Mammary epithelial cell (primary cell): ENCODE measurements at regions of chr10 and their contacts with region 1.

Region 1: GRCh38 chr10:69957886-69958555 is 94.6 kb upstream of the MACROH2A2 start:
- DNase-seq: peak; percentile 52
- H3K4me3 ChIP-seq: no peak overlapping the region
- H3K27ac ChIP-seq: no peak overlapping the region
- H3K4me1 ChIP-seq: peaks cover 22% of the 10 kb centered on the region
- H3K27me3 ChIP-seq: no peaks in the 10 kb centered on the region
- CTCF ChIP-seq: peak; percentile 87 to 98

Region 2: GRCh38 chr10:69644658-69645295 is 313.2 kb before region 1 on chr10:
- CTCF ChIA-PET with region 1: no interaction called
- dilution Hi-C with region 1: no loop called
- in situ Hi-C with region 1: no loop called
- intact Hi-C with region 1: loop called (anchors 1 kb)
- DNase-seq: peak; percentile 52
- H3K4me3 ChIP-seq: no peak overlapping the region
- H3K27ac ChIP-seq: no peak overlapping the region
- H3K4me1 ChIP-seq: peaks cover 28% of the 10 kb centered on the region
- H3K27me3 ChIP-seq: no peaks in the 10 kb centered on the region
- CTCF ChIP-seq: peak; percentile 78 to 88

Region 3: GRCh38 chr10:69742928-69743602 is 215.0 kb before region 1 on chr10:
- CTCF ChIA-PET with region 1: no interaction called
- dilution Hi-C with region 1: no loop called
- in situ Hi-C with region 1: no loop called
- intact Hi-C with region 1: no loop called
- DNase-seq: no peak
- H3K4me3 ChIP-seq: no peak overlapping the region
- H3K27ac ChIP-seq: no peak overlapping the region
- H3K4me1 ChIP-seq: no peaks in the 10 kb centered on the region
- H3K27me3 ChIP-seq: no peaks in the 10 kb centered on the region
- CTCF ChIP-seq: peak; percentile 33 to 38

Region 4: DNA sequence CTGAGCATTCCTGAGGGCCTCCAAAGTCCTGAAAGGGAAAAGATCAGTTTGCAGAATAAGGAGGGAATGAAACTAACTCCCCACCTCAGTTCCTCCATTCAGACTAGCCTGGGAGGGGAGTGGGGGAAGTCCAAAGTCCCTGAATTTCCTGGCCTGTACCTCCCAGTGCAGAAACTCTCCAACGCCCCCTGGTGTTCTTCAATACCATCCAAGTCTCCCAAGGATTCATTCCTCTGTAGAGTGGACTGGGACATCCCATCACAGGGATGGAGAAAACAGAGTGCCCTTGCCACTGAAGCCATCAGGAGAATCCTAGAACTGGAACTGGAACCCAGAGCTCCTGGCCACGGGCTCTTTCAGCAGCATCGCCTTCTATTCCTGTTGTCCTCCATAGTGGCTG is 157.9 kb before region 1 on chr10:
- CTCF ChIA-PET with region 1: no interaction called
- dilution Hi-C with region 1: no loop called
- in situ Hi-C with region 1: no loop called
- intact Hi-C with region 1: loop called (anchors 5 kb)
- DNase-seq: peak; percentile 48
- H3K4me3 ChIP-seq: no peak overlapping the region
- H3K27ac ChIP-seq: no peak overlapping the region
- H3K4me1 ChIP-seq: peaks cover 35% of the 10 kb centered on the region
- H3K27me3 ChIP-seq: no peaks in the 10 kb centered on the region
- CTCF ChIP-seq: peak; percentile 80 to 86

Region 5: DNA sequence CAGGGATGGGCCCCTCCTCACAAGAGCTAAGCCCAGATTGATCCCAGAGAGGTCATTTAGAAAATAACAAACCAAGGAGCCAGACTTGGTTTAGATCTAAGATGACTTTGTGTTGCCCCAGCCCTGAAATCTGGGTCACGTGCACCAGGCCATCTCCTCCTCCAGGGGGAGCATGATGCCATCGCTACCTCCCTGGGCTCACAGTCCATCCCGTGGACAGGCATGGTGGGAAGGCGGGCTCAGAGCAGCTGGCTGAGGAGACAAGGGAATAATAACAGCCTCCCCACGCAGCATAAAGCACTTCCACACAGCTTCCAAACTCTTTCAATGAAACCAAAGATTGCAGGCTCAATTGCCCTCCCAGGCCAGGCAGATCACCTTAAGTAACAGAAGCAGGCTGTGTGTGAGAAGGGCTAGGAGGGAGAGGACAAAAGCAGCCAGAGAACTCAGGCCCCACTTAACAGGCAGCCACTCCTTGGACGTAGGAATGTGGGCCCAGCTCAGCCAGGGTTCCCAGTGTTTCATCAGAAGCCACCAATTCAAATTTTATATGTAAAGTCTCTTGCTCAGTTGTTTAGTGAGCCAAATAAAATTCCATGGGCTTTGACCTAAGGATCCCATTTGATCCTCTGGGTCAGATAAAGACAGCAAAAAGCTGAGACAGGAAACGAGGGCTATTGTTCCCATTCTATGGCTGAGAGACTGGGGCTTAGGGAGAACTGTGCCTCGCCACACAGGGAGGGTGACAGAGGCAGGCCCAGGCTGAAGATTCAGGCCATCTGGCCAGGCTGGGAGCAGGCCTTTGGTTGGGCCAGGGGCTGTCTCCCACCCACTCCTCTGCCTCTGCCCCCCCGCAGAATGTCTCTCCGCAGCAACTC is 56.2 kb before region 1 on chr10:
- CTCF ChIA-PET with region 1: no interaction called
- dilution Hi-C with region 1: no loop called
- in situ Hi-C with region 1: no loop called
- intact Hi-C with region 1: loop called (anchors 1 kb)
- DNase-seq: peak; percentile 19
- H3K4me3 ChIP-seq: no peak overlapping the region
- H3K27ac ChIP-seq: no peak overlapping the region
- H3K4me1 ChIP-seq: peaks cover 3% of the 10 kb centered on the region
- H3K27me3 ChIP-seq: no peaks in the 10 kb centered on the region
- CTCF ChIP-seq: peak; percentile 74 to 76

Region 6: DNA sequence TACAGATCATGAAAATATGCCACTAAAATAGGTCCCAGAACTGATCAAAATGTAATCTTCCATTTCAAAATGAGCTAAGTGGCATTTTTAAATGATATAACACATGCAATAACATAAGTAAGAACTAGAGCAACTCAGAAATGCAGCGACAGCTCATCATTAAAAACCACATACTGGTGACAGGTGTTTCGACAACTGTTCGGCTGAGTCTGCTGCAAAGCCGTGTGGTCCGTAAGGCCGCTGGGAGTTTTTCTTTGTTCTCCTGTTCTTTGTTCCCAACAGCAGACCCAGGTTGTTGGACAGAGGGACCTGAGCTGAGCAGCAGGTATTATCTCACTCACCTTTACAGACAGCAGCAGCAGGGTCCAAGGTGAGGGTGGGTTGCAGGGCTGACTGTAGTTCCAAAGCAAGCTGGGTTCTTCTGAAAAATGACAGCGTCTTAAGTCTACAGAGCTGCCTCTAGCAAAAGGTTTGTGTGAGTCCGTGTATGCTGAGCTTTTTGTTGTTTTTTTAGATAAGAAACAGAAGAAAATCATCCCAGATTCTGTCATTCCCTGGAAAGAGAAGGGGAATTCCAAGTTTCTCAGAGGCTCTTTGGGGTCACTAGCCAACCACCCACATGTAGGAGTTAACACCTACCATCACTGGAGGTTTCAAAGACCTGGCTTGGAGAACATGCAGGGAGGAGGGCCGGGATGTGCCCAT is 49.2 kb after region 1 on chr10:
- CTCF ChIA-PET with region 1: no interaction called
- dilution Hi-C with region 1: loop called (anchors 5 kb)
- in situ Hi-C with region 1: no loop called
- intact Hi-C with region 1: no loop called
- DNase-seq: no peak
- H3K4me3 ChIP-seq: no peak overlapping the region
- H3K27ac ChIP-seq: no peak overlapping the region
- H3K4me1 ChIP-seq: no peaks in the 10 kb centered on the region
- H3K27me3 ChIP-seq: no peaks in the 10 kb centered on the region
- CTCF ChIP-seq: no peak

Region 7: DNA sequence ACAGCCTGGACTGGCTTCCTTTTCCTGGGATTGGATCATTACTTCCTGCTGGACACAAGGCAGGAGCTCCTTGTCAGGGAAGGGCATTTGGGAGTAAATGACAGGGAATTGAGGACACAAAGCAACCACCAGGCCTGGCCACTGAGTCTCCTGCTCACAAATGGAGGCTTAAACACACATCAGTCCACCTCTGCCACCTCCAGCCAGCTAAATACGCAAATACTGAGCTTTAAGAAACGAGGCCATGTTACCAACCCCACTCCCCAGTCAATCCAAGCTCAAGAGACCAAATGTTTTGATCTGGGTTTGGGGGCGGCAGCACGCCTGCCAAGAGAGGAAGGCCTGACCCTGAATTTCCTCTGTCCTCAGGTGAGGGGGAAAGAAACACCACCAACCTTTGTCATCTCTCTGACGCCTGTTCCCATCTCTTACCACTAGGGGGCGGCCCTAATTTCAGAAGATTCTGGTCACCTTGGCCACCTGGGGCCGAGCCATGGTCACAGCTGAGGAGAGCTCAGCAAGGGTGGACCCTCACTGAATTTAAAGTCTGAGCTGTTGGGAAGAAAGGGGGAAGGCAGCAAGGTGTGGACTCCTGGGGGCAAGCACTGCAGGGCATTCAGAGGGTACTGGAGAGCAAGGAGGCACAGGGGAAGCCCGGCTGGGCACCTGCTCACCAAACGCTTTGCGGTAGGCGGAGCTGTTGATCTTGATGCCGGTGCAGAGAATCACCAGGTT is 158.1 kb after region 1 on chr10:
- CTCF ChIA-PET with region 1: interaction called, 5 read pairs
- dilution Hi-C with region 1: no loop called
- in situ Hi-C with region 1: no loop called
- intact Hi-C with region 1: loop called (anchors 10 kb)
- DNase-seq: peak; percentile 25
- H3K4me3 ChIP-seq: no peak overlapping the region
- H3K27ac ChIP-seq: no peak overlapping the region
- H3K4me1 ChIP-seq: no peaks in the 10 kb centered on the region
- H3K27me3 ChIP-seq: no peaks in the 10 kb centered on the region
- CTCF ChIP-seq: peak; percentile 83 to 84

Region 8: DNA sequence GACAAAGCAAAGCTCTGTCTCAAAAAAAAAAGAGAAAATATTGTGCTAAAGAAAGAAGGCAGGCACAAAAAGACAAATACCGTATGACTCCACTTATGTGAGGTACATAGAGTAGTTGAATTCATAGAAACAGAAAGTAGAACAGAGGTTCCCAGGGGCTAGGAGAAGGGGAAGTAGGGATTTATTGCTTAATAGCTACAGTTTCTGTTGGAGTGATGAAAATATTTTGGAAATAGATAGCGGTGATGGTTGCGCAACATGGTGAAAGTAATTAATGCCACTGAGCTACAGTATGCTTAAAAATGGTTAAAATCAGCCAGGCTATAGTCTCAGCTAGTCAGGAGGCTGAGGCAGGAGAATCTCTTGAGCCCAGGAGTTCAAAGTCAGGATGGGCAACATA is 344.3 kb after region 1 on chr10:
- CTCF ChIA-PET with region 1: no interaction called
- dilution Hi-C with region 1: no loop called
- in situ Hi-C with region 1: no loop called
- intact Hi-C with region 1: no loop called
- DNase-seq: no peak
- H3K4me3 ChIP-seq: no peak overlapping the region
- H3K27ac ChIP-seq: no peak overlapping the region
- H3K4me1 ChIP-seq: no peaks in the 10 kb centered on the region
- H3K27me3 ChIP-seq: no peaks in the 10 kb centered on the region
- CTCF ChIP-seq: no peak